ENCODE measurements at regions of chr9 and their contacts with region 1.

Region 1: GRCh38 chr9:114082017-114082762 is 4.1 kb upstream of the AMBP start:
- DNase-seq: peak; percentile 98
- ATAC-seq: peak; percentile 76
- H3K4me3 ChIP-seq: peak overlapping the region; percentile 37 to 69 (median 41); a peak in 5 of 6 replicates
- H3K27ac ChIP-seq: peak overlapping the region; percentile 98
- H3K4me1 ChIP-seq: peaks cover 80% of the 10 kb centered on the region
- H3K27me3 ChIP-seq: no peaks in the 10 kb centered on the region; a peak in 1 of 5 replicates
- CTCF ChIP-seq: peak; percentile 97
- EP300 ChIP-seq: peak in 1 of 2 experiments; percentile 69; a peak in 2 of 4 replicates
- POLR2A ChIP-seq: peak in 1 of 2 experiments; percentile 66; a peak in 2 of 4 replicates
- RAD21 ChIP-seq: peak; percentile 90

Region 2: DNA sequence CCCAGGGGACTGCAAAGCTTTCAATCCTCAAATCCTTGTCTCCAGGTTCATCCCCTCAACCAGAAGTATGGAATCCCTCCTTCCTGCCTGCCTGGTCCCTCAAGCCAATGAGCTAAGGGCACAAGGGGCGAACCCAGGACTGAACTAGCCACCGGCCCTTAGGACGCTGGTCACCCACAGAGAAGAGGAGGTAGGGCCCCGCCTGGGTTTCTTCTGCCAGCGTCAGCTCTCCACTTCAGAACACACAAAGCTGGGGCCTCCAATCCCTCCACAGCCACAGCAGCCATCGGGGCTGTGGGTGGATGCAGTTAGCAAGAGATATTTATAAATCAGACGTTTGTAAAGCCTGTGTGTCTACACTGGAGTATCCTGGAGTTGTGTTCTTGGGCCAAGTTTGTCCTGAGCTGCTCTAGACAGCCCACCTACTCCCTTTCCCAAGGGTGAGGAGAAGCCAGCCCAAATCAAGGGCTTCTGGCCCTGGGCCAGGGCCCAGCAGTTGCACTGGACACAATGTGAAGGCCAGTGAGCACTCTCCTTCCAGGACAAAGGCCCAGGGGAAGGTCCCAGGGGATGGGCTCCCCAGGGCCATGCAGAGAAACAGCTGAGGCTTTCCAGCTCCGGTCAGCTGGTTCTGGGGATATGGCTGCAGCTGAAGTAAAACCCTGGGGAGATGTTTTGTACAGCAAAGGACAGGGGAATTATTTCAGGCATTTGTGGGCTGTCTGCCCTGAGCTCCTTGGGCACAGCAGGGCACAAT is 23.0 kb before region 1 on chr9:
- CTCF ChIA-PET with region 1: no interaction called
- POLR2A ChIA-PET with region 1: interaction called, 52 read pairs
- in situ Hi-C with region 1: no loop called
- intact Hi-C with region 1: no loop called
- DNase-seq: peak; percentile 29
- ATAC-seq: peak; percentile 59
- H3K4me3 ChIP-seq: no peak overlapping the region
- H3K27ac ChIP-seq: peak overlapping the region; percentile 41
- H3K4me1 ChIP-seq: peaks cover 61% of the 10 kb centered on the region
- H3K27me3 ChIP-seq: peaks cover 0 to 2% of the 10 kb centered on the region in 2 experiments; a peak in 1 of 5 replicates
- CTCF ChIP-seq: no peak
- EP300 ChIP-seq: no peak
- POLR2A ChIP-seq: peak; percentile 47 to 69
- RAD21 ChIP-seq: no peak

Region 3: DNA sequence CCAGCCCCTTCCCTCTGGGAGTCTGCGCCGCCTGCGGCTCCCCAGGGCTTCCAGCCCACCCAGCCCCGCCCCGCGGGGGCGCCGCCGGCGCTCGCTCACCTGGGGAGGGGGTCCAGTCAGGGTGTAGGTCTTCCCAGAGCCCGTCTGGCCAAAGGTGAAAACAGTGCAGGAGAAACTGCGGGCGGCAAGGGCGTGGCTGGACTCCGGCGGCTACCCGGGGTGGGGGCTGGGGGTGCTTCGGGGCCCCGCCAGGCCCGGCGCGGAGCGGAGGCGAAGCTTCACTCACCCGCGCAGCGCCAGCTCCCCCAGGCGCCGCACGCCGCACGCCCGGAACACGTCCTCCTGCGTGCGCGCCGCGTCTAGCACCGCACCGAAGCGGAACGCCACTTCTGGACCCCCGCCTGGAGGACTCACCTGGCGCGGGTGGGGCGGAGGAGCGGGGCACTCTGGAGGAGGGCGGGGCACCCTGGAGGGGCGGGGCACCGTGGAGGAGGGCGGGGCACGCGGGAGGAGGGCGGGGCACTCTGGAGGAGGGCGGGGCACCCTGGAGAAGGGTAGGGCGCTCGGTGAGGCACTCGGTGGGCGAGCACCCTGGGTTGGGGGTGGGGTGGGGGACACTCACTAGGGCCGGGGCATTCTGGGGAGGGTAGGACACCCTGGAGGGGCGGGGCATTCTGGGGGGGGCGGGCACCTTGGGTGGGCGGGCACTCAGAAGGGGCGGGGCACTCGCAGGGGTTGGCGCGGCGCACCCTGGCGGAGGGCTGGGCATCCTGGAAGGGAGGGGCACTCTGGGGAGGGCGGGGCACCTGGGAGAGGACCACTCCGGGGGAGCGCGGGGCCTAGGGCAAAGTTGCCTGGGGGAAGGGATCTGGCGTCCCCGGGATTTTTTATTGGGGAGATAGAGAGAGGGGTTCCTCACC is 16.1 kb after region 1 on chr9:
- CTCF ChIA-PET with region 1: no interaction called
- POLR2A ChIA-PET with region 1: interaction called, 63 read pairs
- in situ Hi-C with region 1: no loop called
- intact Hi-C with region 1: no loop called
- DNase-seq: no peak
- ATAC-seq: peak; percentile 43
- H3K4me3 ChIP-seq: peak overlapping the region; percentile 45 to 67 (median 49); a peak in 5 of 6 replicates
- H3K27ac ChIP-seq: peak overlapping the region; percentile 55
- H3K4me1 ChIP-seq: peaks cover 53% of the 10 kb centered on the region
- H3K27me3 ChIP-seq: no peaks in the 10 kb centered on the region
- CTCF ChIP-seq: no peak
- EP300 ChIP-seq: no peak
- POLR2A ChIP-seq: no peak
- RAD21 ChIP-seq: no peak

Region 4: DNA sequence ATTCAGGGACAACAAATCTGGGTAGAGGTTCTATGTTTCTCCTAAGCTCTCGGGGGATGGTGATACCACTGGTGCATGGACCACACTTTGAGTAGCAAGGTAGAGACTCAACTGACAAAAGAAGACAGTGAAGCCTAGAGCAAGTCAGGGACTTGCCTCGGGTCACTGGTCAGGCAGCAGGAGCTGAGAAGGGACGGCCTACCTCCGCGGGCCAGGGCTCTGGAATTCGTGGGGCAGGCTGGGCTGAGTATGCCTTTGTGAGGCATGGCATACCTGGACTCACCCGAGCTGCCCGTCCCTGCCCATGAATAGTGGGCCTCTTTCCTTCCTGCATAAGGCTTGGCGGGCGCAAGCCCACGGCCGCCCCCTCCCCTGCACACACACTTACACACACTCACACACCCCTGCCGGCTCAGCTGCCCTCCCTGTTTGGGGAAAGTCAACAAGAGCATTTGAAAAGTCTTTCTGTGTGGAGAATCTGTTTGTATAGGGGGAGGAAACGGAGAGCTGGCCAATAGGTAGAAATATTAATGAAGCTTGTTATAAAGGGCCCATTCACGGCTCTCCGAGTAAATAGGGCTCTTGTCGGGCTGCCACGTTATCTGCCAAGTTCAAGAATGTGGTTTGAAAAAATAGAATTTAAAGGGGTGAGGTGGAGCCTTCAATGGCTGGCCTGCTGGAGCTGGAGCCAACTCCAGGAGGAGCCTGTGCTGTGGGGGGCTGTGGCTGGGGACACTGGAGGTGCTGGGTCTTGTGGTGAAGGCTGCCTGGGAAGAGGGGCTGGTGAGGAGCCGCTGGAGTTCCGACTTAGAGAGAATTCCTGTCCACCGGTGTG is 36.0 kb after region 1 on chr9:
- CTCF ChIA-PET with region 1: no interaction called
- POLR2A ChIA-PET with region 1: interaction called, 71 read pairs
- in situ Hi-C with region 1: no loop called
- intact Hi-C with region 1: loop called (anchors 1 kb)
- DNase-seq: peak; percentile 99
- ATAC-seq: peak; percentile 81
- H3K4me3 ChIP-seq: peak overlapping the region; percentile 27 to 64 (median 48); a peak in 5 of 6 replicates
- H3K27ac ChIP-seq: peak overlapping the region; percentile 87
- H3K4me1 ChIP-seq: peaks cover 93% of the 10 kb centered on the region
- H3K27me3 ChIP-seq: no peaks in the 10 kb centered on the region
- CTCF ChIP-seq: no peak; the same call in 1 of the 2 replicates
- EP300 ChIP-seq: peak in 1 of 2 experiments; percentile 93; a peak in 2 of 4 replicates
- POLR2A ChIP-seq: peak in 1 of 2 experiments; percentile 59; a peak in 2 of 4 replicates
- RAD21 ChIP-seq: 0 out of 2 replicates have a peak, but pooled peaks have one; percentile 18

Region 5: DNA sequence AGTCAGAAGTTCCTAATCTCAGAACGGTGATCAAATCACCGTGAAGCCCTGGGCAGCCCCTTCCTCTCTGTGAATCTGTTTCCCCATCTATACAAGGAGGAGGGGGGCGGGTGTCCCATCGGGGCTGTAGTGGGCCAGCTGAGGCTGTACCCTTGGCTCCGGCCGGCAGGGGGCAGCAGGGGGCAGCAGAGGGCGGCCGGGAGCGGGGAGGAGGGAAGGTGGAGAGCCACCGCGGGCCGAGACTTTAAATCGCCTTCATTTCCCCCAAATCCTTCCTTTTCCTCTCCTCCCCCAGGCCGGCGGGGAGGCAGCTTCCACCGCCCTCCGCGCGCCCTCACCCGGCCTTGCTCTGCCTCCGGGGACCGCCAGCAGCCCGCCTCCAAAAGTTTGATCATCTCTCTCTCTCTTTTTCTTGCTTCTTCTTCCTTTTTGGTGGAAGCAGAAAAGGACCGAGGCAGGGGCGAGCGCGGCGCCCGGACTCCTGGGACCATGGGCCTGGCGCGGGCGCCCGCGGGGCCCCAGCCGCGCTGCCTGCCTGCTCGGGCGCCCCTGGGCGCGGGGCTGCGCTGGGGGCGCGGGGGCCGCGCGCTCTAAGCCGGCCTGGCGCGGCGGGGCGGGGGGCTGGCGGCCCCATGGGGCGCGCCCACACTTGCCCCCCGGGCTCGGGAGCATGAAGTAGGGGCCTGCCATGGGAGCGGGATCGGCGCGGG is 73.2 kb after region 1 on chr9 and contains the start of gene COL27A1:
- CTCF ChIA-PET with region 1: interaction called, 6 read pairs
- POLR2A ChIA-PET with region 1: interaction called, 32 read pairs
- in situ Hi-C with region 1: no loop called
- intact Hi-C with region 1: loop called (anchors 1 kb)
- DNase-seq: peak; percentile 70
- ATAC-seq: peak; percentile 68
- H3K4me3 ChIP-seq: peak within 1 kb of the TSS; percentile 78 to 100 (median 94)
- H3K27ac ChIP-seq: peak within 1 kb of the TSS; percentile 80
- H3K4me1 ChIP-seq: peaks cover 58% of the 10 kb centered on the region
- H3K27me3 ChIP-seq: peaks cover 0 to 4% of the 10 kb centered on the region in 2 experiments; a peak in 1 of 5 replicates
- CTCF ChIP-seq: peak; percentile 95
- EP300 ChIP-seq: no peak
- POLR2A ChIP-seq: no peak
- RAD21 ChIP-seq: peak; percentile 88
- total RNA-seq, gene COL27A1: 13.1 and 71.3 TPM in 2 replicates

Region 6: DNA sequence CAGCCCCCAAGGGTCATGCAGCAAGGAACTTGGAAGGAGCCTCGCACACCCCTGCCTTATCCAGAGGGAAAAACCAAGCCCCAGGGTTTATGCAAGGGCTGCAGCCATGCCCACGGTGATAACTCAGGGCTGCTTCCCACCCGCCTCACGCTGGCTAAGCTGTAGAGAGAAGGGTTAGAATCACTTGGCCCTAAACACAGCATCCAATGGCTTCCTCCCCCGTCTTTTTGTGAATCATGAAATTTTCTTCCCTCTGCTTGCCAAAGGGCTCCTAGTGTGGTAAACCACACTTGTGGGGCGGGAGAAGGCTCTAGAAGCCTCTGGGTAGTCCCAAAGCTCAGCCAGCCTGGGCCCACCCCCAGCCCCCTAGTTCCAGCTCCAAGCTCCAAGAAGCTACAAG is 184.8 kb after region 1 on chr9:
- CTCF ChIA-PET with region 1: interaction called, 3 read pairs
- POLR2A ChIA-PET with region 1: interaction called, 4 read pairs
- in situ Hi-C with region 1: no loop called
- intact Hi-C with region 1: loop called (anchors 5 kb)
- DNase-seq: no peak
- ATAC-seq: no peak
- H3K4me3 ChIP-seq: no peak overlapping the region
- H3K27ac ChIP-seq: no peak overlapping the region
- H3K4me1 ChIP-seq: peaks cover 24% of the 10 kb centered on the region
- H3K27me3 ChIP-seq: no peaks in the 10 kb centered on the region
- CTCF ChIP-seq: no peak
- EP300 ChIP-seq: no peak
- POLR2A ChIP-seq: no peak
- RAD21 ChIP-seq: no peak